ENCODE measurements at regions of chr11 and their contacts with region 1.

Region 1: DNA sequence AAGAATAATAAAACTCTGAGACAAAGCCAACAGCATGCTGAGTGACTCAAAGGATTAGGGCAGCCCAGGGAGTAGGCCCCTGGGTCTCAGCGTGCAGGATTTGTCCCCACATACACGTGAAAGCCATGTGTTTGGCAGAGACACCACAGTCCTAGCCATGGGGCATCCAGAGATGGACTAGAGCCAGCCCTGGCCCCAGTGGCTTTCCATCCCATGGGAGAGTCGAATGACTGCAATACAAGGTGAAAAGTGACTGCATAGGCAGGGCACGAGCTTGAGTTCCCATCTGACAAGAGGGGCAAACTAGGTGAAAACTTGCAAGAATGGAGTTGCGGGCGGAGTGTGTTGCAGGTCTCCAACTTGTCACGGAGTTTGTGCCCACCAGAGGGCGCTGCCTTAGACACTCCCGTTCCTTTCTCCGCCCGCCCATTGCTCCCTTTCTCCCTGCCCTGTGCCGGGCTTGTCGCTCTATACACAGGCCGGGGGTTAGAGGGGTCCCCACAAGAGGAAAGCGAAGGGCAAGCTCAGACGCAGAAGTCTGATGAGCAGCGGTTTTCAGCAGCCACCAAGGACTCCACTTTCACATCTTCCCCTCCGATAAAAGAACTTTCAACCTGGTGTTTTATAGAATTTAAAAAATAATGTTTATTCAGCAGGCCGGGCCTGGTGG is 24.2 kb downstream of the TSKU start:
- DNase-seq: peak; percentile 90
- H3K4me3 Mint-ChIP-seq: peak overlapping the region; percentile 30
- H3K27ac Mint-ChIP-seq: no peak overlapping the region
- H3K4me1 Mint-ChIP-seq: peaks cover 47% of the 10 kb centered on the region
- H3K27me3 Mint-ChIP-seq: peaks cover 15% of the 10 kb centered on the region

Region 2: GRCh38 chr11:76380967-76381719 is 426.2 kb before region 1 on chr11 and contains the starts of genes GVQW3 and THAP12:
- intact Hi-C with region 1: loop called (anchors 10 kb)
- DNase-seq: peak; percentile 99
- H3K4me3 Mint-ChIP-seq: peak within 1 kb of the TSS; percentile 95
- H3K27ac Mint-ChIP-seq: peak within 1 kb of the TSS; percentile 91
- H3K4me1 Mint-ChIP-seq: peaks cover 40% of the 10 kb centered on the region
- H3K27me3 Mint-ChIP-seq: no peaks in the 10 kb centered on the region
- total RNA-seq, gene GVQW3: 3.7 and 4.3 TPM in 2 replicates
- total RNA-seq, gene THAP12: 77.8 and 80.9 TPM in 2 replicates

Region 3: GRCh38 chr11:76734456-76735420 is 72.6 kb before region 1 on chr11:
- intact Hi-C with region 1: no loop called
- DNase-seq: no peak
- H3K4me3 Mint-ChIP-seq: no peak overlapping the region
- H3K27ac Mint-ChIP-seq: no peak overlapping the region
- H3K4me1 Mint-ChIP-seq: no peaks in the 10 kb centered on the region
- H3K27me3 Mint-ChIP-seq: no peaks in the 10 kb centered on the region

Region 4: GRCh38 chr11:76860539-76861475 is 53.5 kb after region 1 on chr11 and contains the start of gene ACER3:
- intact Hi-C with region 1: loop called (anchors 1 kb)
- DNase-seq: peak; percentile 97
- H3K4me3 Mint-ChIP-seq: peak within 1 kb of the TSS; percentile 90
- H3K27ac Mint-ChIP-seq: peak within 1 kb of the TSS; percentile 84
- H3K4me1 Mint-ChIP-seq: peaks cover 19% of the 10 kb centered on the region
- H3K27me3 Mint-ChIP-seq: no peaks in the 10 kb centered on the region
- total RNA-seq, gene ACER3: 12.5 and 13.8 TPM in 2 replicates

Region 5: DNA sequence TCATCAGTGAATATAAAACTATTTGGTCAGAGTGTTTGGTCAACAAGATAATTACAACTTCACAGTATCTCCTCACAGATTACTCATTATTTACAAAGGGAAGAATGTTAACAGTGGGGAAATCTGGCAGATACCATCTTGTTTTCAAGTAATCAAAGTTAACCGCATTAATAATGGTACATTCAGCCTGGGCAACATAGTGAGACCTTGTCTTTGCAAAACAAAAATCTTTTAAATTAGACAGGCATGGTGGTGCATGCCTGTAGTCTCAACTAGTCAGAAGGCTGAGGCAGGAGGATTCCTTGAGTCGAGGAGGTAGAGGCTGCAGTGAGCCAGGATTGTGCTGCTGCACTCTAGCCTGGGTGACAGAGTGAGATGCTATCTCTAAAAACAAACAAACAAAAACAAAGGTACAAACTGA is 131.9 kb after region 1 on chr11:
- intact Hi-C with region 1: no loop called
- DNase-seq: no peak
- H3K4me3 Mint-ChIP-seq: no peak overlapping the region
- H3K27ac Mint-ChIP-seq: no peak overlapping the region
- H3K4me1 Mint-ChIP-seq: no peaks in the 10 kb centered on the region
- H3K27me3 Mint-ChIP-seq: peaks cover 3% of the 10 kb centered on the region

Region 6: DNA sequence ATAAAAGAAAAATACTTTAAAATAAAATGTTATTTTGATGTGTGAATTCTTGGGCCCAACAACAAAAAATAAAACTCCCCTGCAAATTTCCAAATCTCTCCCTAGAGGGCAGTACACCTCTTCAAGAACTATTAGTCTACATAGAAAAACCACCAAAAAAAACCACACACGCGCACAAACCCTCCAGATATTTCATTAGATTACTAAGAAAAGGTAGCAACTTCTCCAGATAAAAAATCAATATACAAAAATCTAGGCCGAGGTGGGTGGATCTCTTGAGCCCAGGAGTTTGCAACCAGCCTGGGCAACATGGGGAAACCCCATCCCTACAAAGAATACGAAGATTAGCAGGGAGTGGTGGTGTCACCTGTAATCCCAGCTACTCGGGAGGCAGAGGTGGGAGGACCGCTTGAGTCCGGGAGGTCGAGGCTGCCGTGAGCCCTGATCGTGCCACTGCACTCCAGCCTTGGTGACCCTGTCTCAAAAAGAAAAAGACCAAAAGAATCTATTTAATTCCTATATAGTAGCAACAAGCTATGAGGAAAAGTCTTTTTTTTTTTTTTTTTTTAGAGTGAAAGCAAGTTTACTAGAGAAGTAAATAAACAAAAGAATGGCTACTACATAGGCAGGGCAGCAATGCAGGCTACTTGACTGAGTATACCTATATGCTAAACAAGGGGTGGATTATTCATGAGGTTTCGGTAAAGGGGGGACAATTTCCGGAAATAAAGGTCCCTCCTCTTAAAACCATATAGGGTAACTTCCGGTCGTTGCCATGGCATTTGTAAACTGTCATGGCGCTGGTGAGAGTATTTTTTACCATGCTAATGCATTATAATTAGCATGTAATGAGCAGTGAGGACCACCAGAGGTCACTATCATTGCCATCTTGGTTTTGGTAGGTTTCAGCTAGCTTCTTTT is 239.9 kb after region 1 on chr11:
- intact Hi-C with region 1: loop called (anchors 5 kb)
- DNase-seq: peak; percentile 94
- H3K4me3 Mint-ChIP-seq: peak overlapping the region; percentile 69
- H3K27ac Mint-ChIP-seq: peak overlapping the region; percentile 29
- H3K4me1 Mint-ChIP-seq: peaks cover 7% of the 10 kb centered on the region
- H3K27me3 Mint-ChIP-seq: peaks cover 22% of the 10 kb centered on the region